ENCODE measurements at regions of chr4 and their contacts with region 1.

Region 1: GRCh38 chr4:164977243-164978164 is at the start of gene TRIM61:
- DNase-seq: peak; percentile 11 to 63 (median 41)
- ATAC-seq: peak; percentile 46
- H3K4me3 ChIP-seq: peak within 1 kb of the TSS; percentile 68
- H3K4me3 Mint-ChIP-seq: peak within 1 kb of the TSS; percentile 87
- H3K27ac ChIP-seq: peak within 1 kb of the TSS in 1 of 2 donors; percentile 45
- H3K27ac Mint-ChIP-seq: peak within 1 kb of the TSS; percentile 61
- H3K4me1 ChIP-seq: peaks cover 6% of the 10 kb centered on the region
- H3K4me1 Mint-ChIP-seq: peaks cover 11% of the 10 kb centered on the region
- H3K27me3 ChIP-seq: no peaks in the 10 kb centered on the region
- H3K27me3 Mint-ChIP-seq: no peaks in the 10 kb centered on the region
- CTCF ChIP-seq: no peak
- total RNA-seq, gene TRIM61: 0.22 to 0.47 TPM

Region 2: DNA sequence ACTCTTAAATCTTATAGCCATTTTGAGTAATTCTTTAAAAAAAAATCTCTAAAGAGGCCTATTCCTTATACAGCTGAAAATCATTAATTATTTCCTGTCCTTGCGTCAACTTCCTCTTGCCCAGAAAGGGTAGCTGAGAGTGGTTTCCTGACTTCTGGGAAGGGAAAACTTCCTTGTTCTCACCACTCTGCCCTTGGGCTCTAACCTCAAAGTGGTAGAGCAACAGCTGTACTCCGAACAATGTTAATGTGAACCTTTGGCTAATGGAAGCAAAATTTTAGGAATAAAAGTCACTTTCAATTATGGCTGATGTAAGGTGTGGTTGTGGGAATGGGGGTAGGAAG is 245.1 kb after region 1 on chr4:
- CTCF ChIA-PET with region 1: no interaction called
- POLR2A ChIA-PET with region 1: no interaction called
- intact Hi-C with region 1: loop called in 1 of 2 experiments (anchors 5 kb)
- DNase-seq: peak in 3 of 14 experiments; percentile 18 to 24 (median 18)
- ATAC-seq: no peak
- H3K4me3 ChIP-seq: no peak overlapping the region
- H3K4me3 Mint-ChIP-seq: no peak overlapping the region
- H3K27ac ChIP-seq: peak overlapping the region in 1 of 2 donors; percentile 15
- H3K27ac Mint-ChIP-seq: no peak overlapping the region
- H3K4me1 ChIP-seq: peaks cover 9% of the 10 kb centered on the region
- H3K4me1 Mint-ChIP-seq: peaks cover 36% of the 10 kb centered on the region
- H3K27me3 ChIP-seq: no peaks in the 10 kb centered on the region
- H3K27me3 Mint-ChIP-seq: no peaks in the 10 kb centered on the region
- CTCF ChIP-seq: no peak